PC-3 (cell line): ENCODE measurements at regions of chr9 and their contacts with region 1.

Region 1: DNA sequence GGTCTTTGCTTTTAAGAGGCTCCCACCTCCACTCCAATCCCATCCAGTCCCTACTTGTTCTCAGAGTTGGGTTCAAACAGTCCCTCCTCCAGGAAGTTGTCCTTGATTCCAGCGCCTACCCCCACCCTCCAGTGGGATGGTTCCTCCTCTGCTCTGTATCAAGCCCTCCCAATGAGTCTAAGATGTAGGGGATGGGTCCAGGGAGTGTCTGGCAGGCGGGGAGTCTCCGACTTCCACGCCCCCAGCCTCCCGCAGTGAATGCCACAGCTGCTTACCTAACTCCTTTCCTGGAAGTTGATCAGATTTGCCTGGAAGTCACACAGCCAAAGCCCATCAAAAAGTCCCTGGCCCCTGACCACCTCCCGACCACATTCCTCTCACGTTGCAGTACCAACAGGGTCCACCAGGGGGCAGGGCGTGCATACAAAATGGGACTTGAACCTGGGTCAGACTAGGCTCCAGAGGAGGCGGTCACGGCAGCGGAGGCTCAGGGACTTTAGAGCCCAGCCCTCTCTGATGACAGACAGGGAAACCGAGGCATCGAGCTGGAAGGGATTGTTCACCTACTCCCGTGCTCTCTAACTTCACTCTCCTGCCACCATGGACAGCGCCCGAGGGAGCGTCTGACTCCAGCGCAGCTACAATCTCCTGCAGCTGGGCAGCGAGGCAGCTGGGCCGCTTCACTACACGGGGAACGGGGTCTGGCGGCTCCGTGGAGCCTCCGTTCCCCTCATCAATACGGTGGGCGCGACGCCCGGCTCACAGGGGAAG is 25.0 kb upstream of the TDRD7 start:
- DNase-seq: peak; percentile 67
- ATAC-seq: peak; percentile 70
- H3K4me3 ChIP-seq: no peak overlapping the region
- H3K27ac ChIP-seq: no peak overlapping the region
- H3K4me1 ChIP-seq: peaks cover 15% of the 10 kb centered on the region; the same call in 1 of the 2 replicates
- H3K27me3 ChIP-seq: no peaks in the 10 kb centered on the region
- CTCF ChIP-seq: peak; percentile 94

Region 2: GRCh38 chr9:96048104-96048955 is 1338.6 kb before region 1 on chr9:
- CTCF ChIA-PET with region 1: no interaction called
- POLR2A ChIA-PET with region 1: no interaction called
- intact Hi-C with region 1: no loop called
- DNase-seq: no peak
- ATAC-seq: no peak
- H3K4me3 ChIP-seq: no peak overlapping the region
- H3K27ac ChIP-seq: no peak overlapping the region
- H3K4me1 ChIP-seq: no peaks in the 10 kb centered on the region
- H3K27me3 ChIP-seq: no peaks in the 10 kb centered on the region; the same call in 1 of the 2 replicates
- CTCF ChIP-seq: no peak

Region 3: GRCh38 chr9:97140566-97140965 is 246.4 kb before region 1 on chr9:
- CTCF ChIA-PET with region 1: no interaction called
- POLR2A ChIA-PET with region 1: no interaction called
- intact Hi-C with region 1: no loop called
- DNase-seq: no peak
- ATAC-seq: no peak
- H3K4me3 ChIP-seq: no peak overlapping the region
- H3K27ac ChIP-seq: no peak overlapping the region
- H3K4me1 ChIP-seq: no peaks in the 10 kb centered on the region
- H3K27me3 ChIP-seq: no peaks in the 10 kb centered on the region
- CTCF ChIP-seq: no peak

Region 4: GRCh38 chr9:97398999-97399758 is 12.3 kb after region 1 on chr9:
- CTCF ChIA-PET with region 1: interaction called, 3 read pairs
- POLR2A ChIA-PET with region 1: no interaction called
- intact Hi-C with region 1: loop called (anchors 1 kb)
- DNase-seq: peak; percentile 92
- ATAC-seq: peak; percentile 96
- H3K4me3 ChIP-seq: no peak overlapping the region
- H3K27ac ChIP-seq: peak overlapping the region; percentile 41; the same call in 1 of the 2 replicates
- H3K4me1 ChIP-seq: peaks cover 18% of the 10 kb centered on the region
- H3K27me3 ChIP-seq: no peaks in the 10 kb centered on the region
- CTCF ChIP-seq: peak; percentile 86

Region 5: DNA sequence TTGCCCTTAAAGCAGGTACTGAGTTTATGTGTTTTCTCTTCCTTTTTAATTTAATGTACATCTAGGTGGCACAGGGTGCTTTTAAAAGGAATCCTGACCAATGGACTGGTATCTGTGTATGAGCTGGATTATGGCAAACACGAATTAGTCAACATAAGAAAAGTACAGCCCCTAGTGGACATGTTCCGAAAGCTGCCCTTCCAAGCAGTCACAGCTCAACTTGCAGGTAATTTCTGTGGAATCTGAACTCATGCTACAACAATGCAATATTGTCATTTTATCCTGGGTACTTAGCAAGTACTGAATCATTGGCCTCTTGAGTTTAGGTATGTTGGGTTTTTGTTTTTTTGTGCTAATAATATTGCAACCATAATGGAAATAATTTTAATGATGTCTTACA is 100.2 kb after region 1 on chr9:
- CTCF ChIA-PET with region 1: no interaction called
- POLR2A ChIA-PET with region 1: no interaction called
- intact Hi-C with region 1: no loop called
- DNase-seq: peak; percentile 66
- ATAC-seq: peak; percentile 70
- H3K4me3 ChIP-seq: no peak overlapping the region
- H3K27ac ChIP-seq: no peak overlapping the region
- H3K4me1 ChIP-seq: peaks cover 6% of the 10 kb centered on the region; the same call in 1 of the 2 replicates
- H3K27me3 ChIP-seq: no peaks in the 10 kb centered on the region
- CTCF ChIP-seq: peak; percentile 67